Colonic mucosa (tissue), 4 donors: ENCODE measurements at regions of chr2 and their contacts with region 1.

Region 1: GRCh38 chr2:57906152-57906732 is 140.4 kb upstream of the VRK2 start:
- DNase-seq: no peak
- H3K4me3 ChIP-seq: no peak overlapping the region
- H3K27ac ChIP-seq: no peak overlapping the region
- H3K4me1 ChIP-seq: no peaks in the 10 kb centered on the region
- H3K27me3 ChIP-seq: no peaks in the 10 kb centered on the region
- CTCF ChIP-seq: peak; percentile 68

Region 2: DNA sequence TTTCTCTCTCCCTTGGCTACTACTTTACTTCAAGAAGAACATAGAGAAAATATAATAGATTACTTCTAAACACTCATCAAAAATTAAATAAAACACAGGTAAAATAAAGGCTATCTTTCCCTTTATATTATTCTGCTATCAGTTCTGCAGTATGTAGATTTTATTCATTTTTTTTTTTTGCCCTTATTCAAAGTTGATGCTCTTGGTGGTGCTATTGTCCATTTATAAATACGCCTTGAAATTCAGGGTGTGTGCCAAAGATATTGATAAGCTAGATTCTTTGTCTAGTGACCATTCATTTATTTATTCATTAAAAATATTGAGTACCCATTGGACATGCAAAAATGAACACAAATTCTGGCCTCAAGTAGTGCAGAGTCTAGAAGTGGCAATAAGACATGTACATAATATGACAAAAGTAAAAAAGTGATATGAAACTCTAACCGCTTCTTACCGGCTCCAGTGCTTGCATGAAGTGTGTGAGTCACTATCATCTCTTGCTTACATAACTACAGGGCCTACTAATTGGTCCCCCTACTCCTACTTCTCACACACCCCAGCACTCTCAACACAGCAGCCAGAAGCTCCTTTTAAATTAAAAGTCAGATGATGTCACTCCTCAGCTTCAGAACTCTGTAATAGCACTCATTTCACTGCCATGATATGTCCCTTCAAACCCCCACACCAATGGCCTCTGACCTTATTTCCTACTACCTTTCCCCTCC is 543.2 kb after region 1 on chr2:
- intact Hi-C with region 1: loop called (anchors 2 kb)
- DNase-seq: no peak
- H3K4me3 ChIP-seq: no peak overlapping the region
- H3K27ac ChIP-seq: no peak overlapping the region
- H3K4me1 ChIP-seq: no peaks in the 10 kb centered on the region
- H3K27me3 ChIP-seq: no peaks in the 10 kb centered on the region
- CTCF ChIP-seq: no peak